Activated CD4-positive, alpha-beta T cell treated with anti-CD3 and anti-CD28 coated beads for 36 hours (primary cell): ENCODE measurements at regions of chr14 and their contacts with region 1.

Region 1: DNA sequence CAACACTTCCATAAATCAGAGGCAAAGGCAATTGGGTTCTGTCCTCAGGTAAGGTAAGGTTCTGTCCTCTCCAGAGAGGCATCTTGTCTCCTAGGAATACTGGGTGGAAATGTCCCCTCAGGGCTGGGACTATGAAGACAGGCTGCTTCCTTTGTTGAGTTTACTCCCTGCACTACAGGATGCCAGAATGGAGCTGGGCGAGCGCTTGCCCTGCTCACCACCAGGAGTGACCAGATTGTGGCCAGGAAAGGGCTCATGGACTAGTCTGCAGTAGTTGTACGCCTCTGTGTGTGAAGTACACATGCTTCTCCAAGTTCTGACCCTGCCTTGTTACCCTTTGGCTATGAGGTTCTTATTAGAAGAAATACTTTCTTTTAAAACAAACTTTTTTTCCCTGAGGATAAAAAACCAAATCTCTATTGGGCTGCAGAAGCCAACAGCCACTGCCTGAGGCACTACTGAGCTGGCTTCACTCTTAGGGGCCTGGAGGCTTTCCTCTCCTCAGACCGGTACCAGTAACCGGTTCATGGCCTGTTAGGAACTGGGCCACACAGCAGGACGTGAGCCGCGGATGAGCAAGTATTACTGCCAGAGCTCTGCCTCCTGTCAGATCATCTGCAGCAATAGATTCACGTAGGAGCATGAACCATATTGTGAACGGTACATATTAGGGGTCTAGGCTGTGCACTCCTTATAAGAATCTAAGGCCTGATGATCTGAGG is 83.2 kb downstream of the DHRS2 start:
- DNase-seq: no peak
- ATAC-seq: no peak
- H3K4me3 Mint-ChIP-seq: no peak overlapping the region
- H3K27ac Mint-ChIP-seq: no peak overlapping the region
- H3K4me1 Mint-ChIP-seq: no peaks in the 10 kb centered on the region
- H3K27me3 Mint-ChIP-seq: peaks cover 7% of the 10 kb centered on the region

Region 2: GRCh38 chr14:22671622-22672021 is 1047.8 kb before region 1 on chr14:
- CTCF ChIA-PET with region 1: no interaction called
- POLR2A ChIA-PET with region 1: no interaction called
- intact Hi-C with region 1: loop called in 1 of 2 experiments (anchors 10 kb)
- DNase-seq: peak; percentile 20
- ATAC-seq: peak; percentile 49
- H3K4me3 Mint-ChIP-seq: no peak overlapping the region
- H3K27ac Mint-ChIP-seq: no peak overlapping the region
- H3K4me1 Mint-ChIP-seq: peaks cover 15% of the 10 kb centered on the region
- H3K27me3 Mint-ChIP-seq: peaks cover 5% of the 10 kb centered on the region

Region 3: DNA sequence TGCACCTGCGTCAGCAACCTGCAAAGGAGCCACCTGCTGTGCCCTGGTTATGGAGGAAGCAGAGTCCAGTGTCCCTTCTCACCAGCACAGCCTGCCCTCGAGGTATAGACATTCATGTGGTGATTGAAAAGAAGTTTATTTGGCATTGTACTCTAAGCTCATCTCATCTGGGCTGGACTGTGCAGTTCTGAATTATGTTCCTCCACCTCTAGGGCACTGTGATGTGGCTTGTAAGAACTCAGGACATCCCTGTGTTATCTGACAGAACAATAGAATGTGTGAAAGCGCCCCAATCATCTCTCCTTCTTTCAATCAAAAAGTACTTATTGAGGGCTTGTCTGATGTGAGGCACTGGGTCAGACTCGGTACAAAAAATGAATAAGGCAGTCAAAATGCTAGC is 56.9 kb after region 1 on chr14:
- CTCF ChIA-PET with region 1: no interaction called
- POLR2A ChIA-PET with region 1: no interaction called
- intact Hi-C with region 1: no loop called
- DNase-seq: no peak
- ATAC-seq: no peak
- H3K4me3 Mint-ChIP-seq: no peak overlapping the region
- H3K27ac Mint-ChIP-seq: no peak overlapping the region
- H3K4me1 Mint-ChIP-seq: no peaks in the 10 kb centered on the region
- H3K27me3 Mint-ChIP-seq: peaks cover 35% of the 10 kb centered on the region

Region 4: DNA sequence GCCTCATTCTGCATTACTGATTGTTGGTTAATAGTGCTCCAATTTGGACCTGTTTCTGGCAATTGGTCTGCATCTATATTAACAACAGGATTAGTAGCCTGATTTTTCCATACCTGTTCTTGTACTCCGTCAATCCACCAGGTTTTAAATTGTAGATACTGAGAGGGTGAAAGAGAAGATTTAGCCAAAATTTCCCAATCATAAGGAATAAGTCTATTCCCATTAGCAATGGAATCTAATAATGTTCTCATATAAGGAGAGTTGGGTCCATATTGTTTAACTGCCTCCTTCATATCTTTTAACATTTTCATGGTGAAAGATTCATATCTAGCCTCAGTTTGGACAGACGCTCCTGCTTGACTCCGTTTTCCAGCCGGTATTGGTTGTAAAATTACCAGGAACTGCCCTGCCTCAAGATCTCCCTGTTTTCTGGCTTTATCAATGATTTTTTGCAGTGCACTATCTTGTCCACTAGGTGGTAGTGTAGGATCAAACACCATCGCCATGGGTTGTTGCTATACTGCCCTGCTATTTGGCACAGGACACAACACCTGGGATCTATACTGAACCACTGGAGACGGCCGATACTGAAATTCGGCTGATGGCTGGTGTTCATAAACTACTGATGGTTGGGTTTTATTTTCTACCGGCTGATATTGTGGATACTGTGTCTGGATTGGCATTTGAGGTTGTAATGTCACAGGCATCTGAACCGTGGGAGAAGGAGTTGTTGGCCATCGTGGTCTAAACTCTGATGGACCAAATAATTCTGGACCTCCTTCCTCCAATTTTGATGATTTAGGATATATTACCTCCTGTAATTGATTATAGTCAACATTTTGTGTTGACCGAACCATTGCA is 294.5 kb after region 1 on chr14:
- CTCF ChIA-PET with region 1: no interaction called
- POLR2A ChIA-PET with region 1: no interaction called
- intact Hi-C with region 1: no loop called
- DNase-seq: peak; percentile 63
- ATAC-seq: peak; percentile 98
- H3K4me3 Mint-ChIP-seq: no peak overlapping the region
- H3K27ac Mint-ChIP-seq: no peak overlapping the region
- H3K4me1 Mint-ChIP-seq: peaks cover 23% of the 10 kb centered on the region
- H3K27me3 Mint-ChIP-seq: no peaks in the 10 kb centered on the region